Common myeloid progenitor, CD34-positive (primary cell): ENCODE measurements at regions of chr12 and their contacts with region 1.

Region 1: DNA sequence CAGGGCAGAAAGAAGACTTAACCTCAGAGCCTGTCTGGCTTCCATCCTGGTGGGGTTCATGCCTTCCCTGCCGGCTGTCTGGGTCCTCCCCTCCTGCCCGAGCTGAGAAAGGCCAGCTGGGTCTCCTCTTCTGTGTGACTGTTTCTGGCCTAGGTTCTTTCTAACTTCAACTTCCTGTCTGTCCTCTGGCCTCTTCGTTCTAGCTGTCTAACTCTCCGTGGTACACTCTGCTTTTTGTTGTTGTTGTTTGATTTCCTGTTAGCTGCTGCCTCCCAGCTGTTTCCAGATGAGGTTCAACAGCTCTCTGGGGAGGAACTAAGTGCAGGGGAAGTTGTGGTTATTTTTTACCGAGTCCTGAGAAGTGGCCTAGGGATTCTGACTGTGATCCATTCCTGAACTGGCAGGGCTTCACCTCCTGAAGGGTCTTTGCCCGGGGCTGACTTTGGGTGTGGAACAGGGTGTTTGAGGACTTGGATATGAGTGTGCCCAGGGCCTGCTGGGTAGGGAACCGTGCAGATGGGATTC is 3.2 kb downstream of the MLXIP start:
- DNase-seq: peak; percentile 75 to 94 (median 90)
- H3K4me3 ChIP-seq: peak overlapping the region in 6 of 7 experiments; percentile 93 to 99 (median 96)
- H3K27ac ChIP-seq: peak overlapping the region; percentile 46 to 88
- H3K4me1 ChIP-seq: peaks cover 26 to 82% (median 62%) of the 10 kb centered on the region in 4 experiments
- H3K27me3 ChIP-seq: no peaks in the 10 kb centered on the region

Region 2: GRCh38 chr12:121668750-121669520 is 412.8 kb before region 1 on chr12:
- CTCF ChIA-PET with region 1: no interaction called
- POLR2A ChIA-PET with region 1: no interaction called
- DNase-seq: peak; percentile 77 to 86 (median 81)
- H3K4me3 ChIP-seq: no peak overlapping the region
- H3K27ac ChIP-seq: no peak overlapping the region
- H3K4me1 ChIP-seq: peaks cover 3 to 48% (median 34%) of the 10 kb centered on the region in 4 experiments
- H3K27me3 ChIP-seq: no peaks in the 10 kb centered on the region

Region 3: DNA sequence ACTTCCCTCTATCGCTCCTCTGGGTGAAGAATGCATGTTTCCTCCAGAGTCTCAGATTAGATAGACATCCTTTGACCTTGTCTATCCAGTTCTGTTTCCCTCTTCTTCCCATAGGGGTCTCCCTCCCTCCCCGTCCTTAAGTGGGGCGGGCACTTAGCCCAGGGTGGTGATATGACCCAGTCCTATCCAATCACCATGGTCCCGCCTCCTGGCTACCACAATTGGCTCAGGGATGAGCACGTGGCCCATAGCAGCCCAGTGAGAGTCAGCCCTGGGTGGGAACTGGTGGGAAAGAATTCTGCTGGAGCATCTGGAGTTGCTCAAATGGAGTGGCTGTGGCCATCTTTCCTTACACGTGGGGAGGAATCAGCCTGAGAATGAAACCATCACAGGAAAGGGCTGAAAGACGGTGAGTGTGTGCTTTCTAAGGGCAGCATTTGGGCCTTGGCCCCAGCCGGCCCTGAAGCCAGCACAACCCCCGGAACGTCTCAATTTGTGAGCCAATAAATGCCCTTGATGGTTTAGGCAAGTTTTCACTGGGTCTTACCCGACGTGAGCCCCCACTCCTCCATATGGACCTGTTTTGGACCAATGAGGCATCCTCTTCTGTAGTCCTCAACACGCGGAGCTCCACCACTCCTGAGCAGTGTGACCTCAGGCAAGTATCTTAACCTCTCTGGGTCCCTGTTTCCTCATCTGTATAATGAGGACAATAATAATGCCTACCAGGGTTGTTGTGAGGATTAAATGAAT is 17.6 kb before region 1 on chr12:
- CTCF ChIA-PET with region 1: interaction called, 19 read pairs
- POLR2A ChIA-PET with region 1: interaction called, 5 read pairs
- DNase-seq: peak; percentile 88 to 90 (median 88)
- H3K4me3 ChIP-seq: peak overlapping the region in 2 of 7 experiments; percentile 14 to 33
- H3K27ac ChIP-seq: peak overlapping the region in 1 of 2 experiments; percentile 70
- H3K4me1 ChIP-seq: peaks cover 6 to 37% (median 32%) of the 10 kb centered on the region in 4 experiments
- H3K27me3 ChIP-seq: no peaks in the 10 kb centered on the region

Region 4: DNA sequence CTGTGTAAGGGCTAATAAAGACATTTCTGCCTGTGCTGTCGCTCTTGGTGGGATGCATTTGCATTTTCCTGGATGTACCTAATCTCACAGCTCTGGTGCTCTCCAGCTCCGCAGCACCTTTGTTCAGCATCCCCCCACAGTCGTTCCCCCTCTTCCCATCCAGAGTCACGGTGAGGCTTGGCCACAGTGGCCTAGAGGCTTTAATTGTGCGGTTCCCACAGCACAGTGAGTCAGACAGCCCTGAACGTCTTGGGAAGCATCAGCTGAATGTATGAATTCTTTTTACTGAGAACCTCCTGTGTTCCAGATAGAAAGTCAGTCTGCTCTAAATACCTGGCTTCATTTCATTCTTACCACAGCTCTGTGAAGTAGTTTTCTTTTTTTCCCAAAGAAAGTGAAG is 25.5 kb after region 1 on chr12:
- CTCF ChIA-PET with region 1: interaction called, 63 read pairs
- POLR2A ChIA-PET with region 1: interaction called, 11 read pairs
- DNase-seq: no peak
- H3K4me3 ChIP-seq: no peak overlapping the region
- H3K27ac ChIP-seq: no peak overlapping the region
- H3K4me1 ChIP-seq: peaks cover 3 to 52% (median 28%) of the 10 kb centered on the region in 4 experiments
- H3K27me3 ChIP-seq: no peaks in the 10 kb centered on the region